Right cardiac atrium (tissue), 5 donors: ENCODE measurements at regions of chr12 and their contacts with region 1.

Region 1: DNA sequence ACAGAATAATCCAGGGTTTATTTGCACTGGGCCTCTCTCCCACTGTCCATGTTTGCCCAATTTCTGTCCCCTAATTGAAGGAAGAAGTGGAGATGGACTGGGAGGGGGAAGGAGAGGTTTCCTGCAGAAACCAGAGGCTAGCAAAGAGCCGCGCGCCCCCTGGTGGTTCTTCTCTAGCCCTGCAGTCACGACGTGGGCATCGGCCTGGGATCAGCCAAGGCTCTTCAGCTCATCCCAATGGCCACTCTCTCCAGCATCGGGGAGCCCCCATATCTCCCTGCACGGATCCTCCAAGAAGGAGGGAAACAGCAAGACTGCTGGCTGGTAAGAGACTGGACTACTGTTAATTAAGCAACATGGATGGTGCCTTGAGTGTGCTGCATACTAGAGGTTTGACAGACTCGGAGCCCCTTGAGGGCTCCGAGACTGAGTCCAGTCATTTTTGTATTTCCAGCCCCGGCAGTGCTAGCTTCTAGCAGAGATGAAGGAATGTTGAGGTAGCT is 18.7 kb downstream of the ZBTB39 start:
- DNase-seq: peak; percentile 80 to 91 (median 90)
- ATAC-seq: peak; percentile 81 to 84
- H3K4me3 ChIP-seq: no peak overlapping the region
- H3K27ac ChIP-seq: no peak overlapping the region
- H3K4me1 ChIP-seq: peaks cover 6% of the 10 kb centered on the region
- H3K27me3 ChIP-seq: no peaks in the 10 kb centered on the region

Region 2: DNA sequence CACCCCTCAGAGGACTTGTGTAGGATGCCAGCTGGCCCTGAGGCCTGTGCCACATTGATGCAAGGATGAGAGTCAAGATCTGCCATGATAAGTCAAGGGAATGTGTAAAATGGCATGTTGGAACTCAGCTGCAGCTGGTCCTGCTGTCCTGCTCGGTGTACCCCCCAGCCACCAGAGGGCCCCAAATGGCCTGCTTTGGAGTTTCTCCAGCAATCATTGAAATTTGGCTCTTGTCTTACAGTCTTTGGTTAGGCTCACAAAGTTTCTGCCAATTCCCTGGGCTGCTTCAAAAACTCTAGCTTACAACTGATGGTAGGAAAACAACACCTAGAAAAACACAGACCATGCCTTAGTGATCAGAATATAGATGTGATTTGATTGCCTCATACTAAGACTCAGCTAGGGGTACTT is 147.7 kb before region 1 on chr12:
- intact Hi-C with region 1: loop called in 1 of 4 experiments (anchors 10 kb)
- DNase-seq: peak; percentile 49 to 68 (median 67)
- ATAC-seq: peak; percentile 64 to 72
- H3K4me3 ChIP-seq: no peak overlapping the region
- H3K27ac ChIP-seq: no peak overlapping the region
- H3K4me1 ChIP-seq: peaks cover 3% of the 10 kb centered on the region
- H3K27me3 ChIP-seq: no peaks in the 10 kb centered on the region